GM18951 (cell line): ENCODE measurements at regions of chr12 and their contacts with region 1.

Region 1: GRCh38 chr12:99619389-99620158 is 28.0 kb upstream of the GARIN6 start:
- POLR2A ChIP-seq: no peak

Region 2: GRCh38 chr12:99386907-99387306 is 232.7 kb before region 1 on chr12:
- in situ Hi-C with region 1: loop called (anchors 10 kb)
- POLR2A ChIP-seq: no peak

Region 3: GRCh38 chr12:99911081-99911480 is 291.5 kb after region 1 on chr12:
- in situ Hi-C with region 1: no loop called
- POLR2A ChIP-seq: no peak